ENCODE measurements at regions of chr6 and their contacts with region 1.

Region 1: DNA sequence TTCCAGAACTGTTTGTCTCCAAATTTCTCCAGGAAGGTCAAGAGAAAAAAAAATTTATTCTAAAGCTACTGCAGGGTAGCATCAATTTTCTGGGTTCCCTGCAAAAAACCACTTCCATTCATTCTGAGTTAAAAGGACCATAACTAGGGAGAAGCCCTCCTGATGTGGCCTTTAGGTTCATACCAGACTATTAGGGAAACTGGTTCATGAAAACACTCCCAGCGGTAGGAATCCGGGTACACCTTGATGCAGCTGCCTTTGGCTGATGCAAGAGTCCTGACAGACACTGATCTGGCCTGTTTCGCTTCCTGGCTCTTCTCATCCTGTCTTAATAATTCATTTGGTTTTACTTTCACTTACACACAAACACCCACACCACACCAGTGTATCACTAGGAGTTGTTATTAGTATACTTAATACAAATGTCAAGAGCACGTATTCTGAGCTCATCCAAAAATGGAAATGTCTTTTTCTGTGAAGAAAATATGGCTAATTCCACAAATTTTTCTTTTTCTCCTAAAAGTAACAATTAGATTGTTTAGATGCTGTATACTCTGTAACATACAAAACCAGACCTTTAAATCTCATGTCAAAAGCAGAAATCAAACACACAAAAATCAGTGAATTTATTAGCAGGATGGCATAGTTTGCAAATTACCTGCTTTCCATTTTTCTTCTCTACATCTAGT is 38.4 kb upstream of the ARHGAP18 start:
- DNase-seq: peak; percentile 28
- H3K4me3 ChIP-seq: no peak overlapping the region
- H3K27ac ChIP-seq: peak overlapping the region; percentile 80
- H3K4me1 ChIP-seq: peaks cover 53% of the 10 kb centered on the region
- H3K27me3 ChIP-seq: no peaks in the 10 kb centered on the region
- CTCF ChIP-seq: no peak
- POLR2A ChIP-seq: no peak

Region 2: DNA sequence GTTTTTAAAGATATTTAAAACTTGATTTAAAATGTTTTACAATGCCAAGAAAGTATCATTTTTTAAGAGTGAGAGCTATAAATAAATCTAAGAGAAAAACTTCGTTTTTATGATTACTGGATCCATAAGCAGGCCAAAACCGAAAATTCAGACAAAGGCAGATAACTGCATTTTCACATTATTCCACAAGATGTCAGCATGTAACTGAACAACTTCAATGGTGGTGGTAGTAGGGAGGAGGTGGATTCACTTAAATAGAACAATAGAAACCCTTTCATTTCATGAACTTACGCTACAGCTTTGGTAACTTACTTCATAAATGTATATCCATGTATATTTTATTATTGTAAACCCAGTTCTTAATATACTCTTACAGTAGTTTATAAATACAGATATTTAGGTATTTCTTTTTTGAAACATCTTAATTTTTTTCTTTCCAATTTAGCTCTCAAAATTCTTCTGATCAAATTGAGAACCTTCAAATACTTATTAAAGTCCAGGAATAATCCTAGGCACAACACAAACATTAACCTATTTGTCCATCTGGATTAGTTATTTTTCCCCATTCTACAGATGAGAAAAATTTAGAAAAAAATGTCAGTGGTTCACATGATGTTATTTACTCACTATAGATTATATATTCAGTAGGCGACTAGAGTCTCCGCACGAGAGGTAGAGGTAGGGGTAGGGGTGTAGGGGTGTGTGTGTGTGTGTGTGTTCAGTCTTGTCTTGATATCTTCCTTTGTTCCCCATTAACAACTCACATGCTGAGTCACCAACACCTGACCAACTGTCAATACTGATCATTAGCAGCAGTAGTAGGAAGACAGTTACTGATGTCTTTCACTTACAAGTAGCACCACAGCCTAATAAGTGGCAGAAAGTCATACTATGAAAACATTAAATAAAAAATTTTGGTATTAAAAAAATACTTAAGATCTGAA is 149.8 kb before region 1 on chr6:
- CTCF ChIA-PET with region 1: interaction called, 15 read pairs
- POLR2A ChIA-PET with region 1: no interaction called
- dilution Hi-C with region 1: no loop called
- intact Hi-C with region 1: no loop called
- DNase-seq: peak; percentile 87
- H3K4me3 ChIP-seq: no peak overlapping the region
- H3K27ac ChIP-seq: peak overlapping the region; percentile 32
- H3K4me1 ChIP-seq: peaks cover 5% of the 10 kb centered on the region
- H3K27me3 ChIP-seq: no peaks in the 10 kb centered on the region
- CTCF ChIP-seq: peak; percentile 41 to 47
- POLR2A ChIP-seq: peak; percentile 19

Region 3: DNA sequence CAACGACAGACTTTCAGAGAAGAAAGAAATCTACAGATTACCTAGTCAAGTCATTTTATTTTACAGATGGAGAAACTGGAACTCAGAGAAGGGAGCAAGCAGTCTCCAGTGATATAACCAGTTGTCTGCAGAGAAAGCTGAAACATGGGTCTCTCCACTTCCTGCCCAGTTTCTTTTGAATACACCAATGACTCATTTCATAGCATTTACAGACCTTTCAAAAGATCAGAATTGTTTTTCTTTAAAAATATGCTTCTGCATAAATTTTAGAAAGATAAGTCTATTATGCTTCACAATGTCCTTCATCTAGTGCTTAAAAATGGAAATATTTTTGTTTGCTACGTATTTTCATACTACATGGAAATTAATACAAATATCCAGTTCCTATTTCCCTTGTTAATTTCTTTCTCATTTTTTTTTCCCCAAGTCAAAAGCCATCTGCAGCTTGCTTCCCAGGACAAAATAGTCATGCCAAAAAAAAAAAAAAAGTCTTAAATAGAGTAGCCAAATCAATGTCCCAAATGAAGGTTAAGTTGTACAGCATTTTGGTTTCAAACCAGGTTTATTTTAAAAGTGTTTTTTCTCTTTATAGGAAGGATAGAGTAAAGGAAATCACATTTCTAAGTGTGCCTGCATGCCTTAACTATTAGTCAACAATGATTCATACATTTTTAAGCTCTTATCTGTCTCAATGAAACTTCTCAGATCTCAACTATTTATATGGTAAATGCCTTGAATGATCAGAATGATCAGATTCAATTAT is 75.3 kb before region 1 on chr6:
- CTCF ChIA-PET with region 1: interaction called, 7 read pairs
- POLR2A ChIA-PET with region 1: no interaction called
- dilution Hi-C with region 1: no loop called
- intact Hi-C with region 1: loop called (anchors 2 kb)
- DNase-seq: peak; percentile 88
- H3K4me3 ChIP-seq: peak overlapping the region in 1 of 3 experiments; percentile 58
- H3K27ac ChIP-seq: peak overlapping the region; percentile 93
- H3K4me1 ChIP-seq: peaks cover 72% of the 10 kb centered on the region
- H3K27me3 ChIP-seq: no peaks in the 10 kb centered on the region
- CTCF ChIP-seq: no peak
- POLR2A ChIP-seq: no peak

Region 4: GRCh38 chr6:129730477-129731165 is 17.7 kb before region 1 on chr6:
- CTCF ChIA-PET with region 1: interaction called, 29 read pairs
- POLR2A ChIA-PET with region 1: no interaction called
- dilution Hi-C with region 1: no loop called
- intact Hi-C with region 1: loop called (anchors 2 kb)
- DNase-seq: peak; percentile 63
- H3K4me3 ChIP-seq: no peak overlapping the region
- H3K27ac ChIP-seq: no peak overlapping the region
- H3K4me1 ChIP-seq: peaks cover 7% of the 10 kb centered on the region
- H3K27me3 ChIP-seq: no peaks in the 10 kb centered on the region
- CTCF ChIP-seq: peak; percentile 29 to 40
- POLR2A ChIP-seq: no peak

Region 5: DNA sequence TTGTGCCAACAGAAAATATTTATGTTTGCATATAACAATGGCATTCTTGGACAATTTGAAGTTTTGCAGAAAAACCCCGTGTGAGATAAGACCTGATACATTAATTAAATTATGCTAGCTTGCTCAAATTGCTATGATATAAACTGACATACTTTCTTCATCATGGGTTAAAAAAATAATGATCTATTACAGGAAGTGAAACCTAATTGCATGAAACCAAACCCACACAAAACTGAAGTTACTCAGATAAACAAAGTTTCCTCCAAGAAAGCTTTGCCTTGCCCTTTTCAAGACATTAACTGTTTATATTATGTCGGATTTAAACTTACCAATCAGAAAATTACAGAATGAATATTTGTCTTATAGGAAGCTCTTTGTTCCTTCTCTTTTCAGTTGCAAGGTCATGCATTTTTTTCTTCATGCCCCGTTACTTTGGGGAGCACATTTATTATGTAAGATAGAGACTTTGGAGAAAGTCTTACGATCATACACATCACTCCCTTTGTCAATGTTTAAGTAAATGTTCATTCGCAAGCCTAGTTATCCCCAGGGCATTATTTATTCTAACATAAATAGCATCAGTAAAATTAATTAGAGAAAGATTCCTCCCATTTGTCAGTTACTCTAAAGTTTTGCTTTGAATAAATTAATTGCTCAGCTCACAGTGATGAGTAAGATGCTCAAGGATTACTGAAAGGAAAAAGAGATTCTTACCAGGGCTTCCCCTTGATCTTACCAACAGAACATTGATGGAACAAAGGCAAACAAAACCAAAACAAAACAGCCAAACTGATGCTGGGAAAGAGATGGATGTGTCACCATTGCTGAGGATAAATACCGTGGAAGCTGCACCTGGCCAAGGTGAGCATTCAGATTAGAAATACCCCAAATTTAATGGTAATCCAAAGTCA is 127.5 kb after region 1 on chr6:
- CTCF ChIA-PET with region 1: no interaction called
- POLR2A ChIA-PET with region 1: no interaction called
- dilution Hi-C with region 1: no loop called
- intact Hi-C with region 1: no loop called
- DNase-seq: no peak
- H3K4me3 ChIP-seq: no peak overlapping the region
- H3K27ac ChIP-seq: no peak overlapping the region
- H3K4me1 ChIP-seq: no peaks in the 10 kb centered on the region
- H3K27me3 ChIP-seq: peaks cover 2 to 14% of the 10 kb centered on the region in 2 experiments
- CTCF ChIP-seq: no peak
- POLR2A ChIP-seq: no peak